ENCODE measurements at regions of chr3 and their contacts with region 1.

Region 1: GRCh38 chr3:117019082-117019713 is 309.6 kb downstream of the TUSC7 start:
- DNase-seq: peak; percentile 51
- ATAC-seq: peak; percentile 93
- H3K4me3 ChIP-seq: peak overlapping the region in 1 of 2 experiments; percentile 17; a peak in 1 of 4 replicates
- H3K27ac ChIP-seq: no peak overlapping the region
- H3K4me1 ChIP-seq: peaks cover 3% of the 10 kb centered on the region; the same call in 1 of the 2 replicates
- H3K27me3 ChIP-seq: peaks cover 5% of the 10 kb centered on the region
- CTCF ChIP-seq: peak; percentile 89

Region 2: DNA sequence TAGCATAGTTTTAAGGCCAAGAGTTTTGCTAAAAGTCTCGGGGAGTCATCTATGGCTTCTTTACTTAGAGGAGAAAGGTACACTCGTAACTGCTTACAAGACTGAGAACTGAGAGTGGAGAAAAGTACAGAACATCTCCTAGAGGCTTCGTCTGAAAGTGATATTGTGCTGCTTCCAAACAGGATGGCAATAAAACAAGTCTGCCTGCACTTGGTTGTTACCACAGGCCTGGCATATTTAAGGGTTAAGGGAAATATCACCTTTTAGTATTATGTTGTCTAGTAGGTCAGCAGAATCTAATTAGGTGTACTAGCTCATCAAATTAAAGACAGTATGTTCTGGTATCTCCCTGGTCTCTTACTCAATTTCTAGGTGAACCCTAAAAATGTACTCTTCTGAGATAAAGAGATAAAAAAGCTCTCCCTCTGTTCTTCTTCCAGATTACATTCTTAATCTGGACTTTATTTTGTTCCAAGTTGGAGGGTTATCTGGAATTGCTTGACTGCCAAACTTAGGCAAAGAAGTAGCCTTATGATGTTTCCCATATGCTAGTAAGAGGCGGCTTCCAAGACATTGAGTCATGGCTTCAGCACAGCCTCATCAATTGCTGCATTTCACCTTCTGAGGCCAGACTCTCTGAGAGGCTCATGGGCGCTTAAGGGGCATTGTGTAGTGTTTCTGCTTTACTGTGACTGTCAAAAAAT is 755.2 kb before region 1 on chr3:
- CTCF ChIA-PET with region 1: no interaction called
- POLR2A ChIA-PET with region 1: no interaction called
- in situ Hi-C with region 1: no loop called
- intact Hi-C with region 1: no loop called
- DNase-seq: no peak
- ATAC-seq: no peak
- H3K4me3 ChIP-seq: no peak overlapping the region
- H3K27ac ChIP-seq: no peak overlapping the region
- H3K4me1 ChIP-seq: no peaks in the 10 kb centered on the region; the same call in 1 of the 2 replicates
- H3K27me3 ChIP-seq: no peaks in the 10 kb centered on the region
- CTCF ChIP-seq: no peak

Region 3: DNA sequence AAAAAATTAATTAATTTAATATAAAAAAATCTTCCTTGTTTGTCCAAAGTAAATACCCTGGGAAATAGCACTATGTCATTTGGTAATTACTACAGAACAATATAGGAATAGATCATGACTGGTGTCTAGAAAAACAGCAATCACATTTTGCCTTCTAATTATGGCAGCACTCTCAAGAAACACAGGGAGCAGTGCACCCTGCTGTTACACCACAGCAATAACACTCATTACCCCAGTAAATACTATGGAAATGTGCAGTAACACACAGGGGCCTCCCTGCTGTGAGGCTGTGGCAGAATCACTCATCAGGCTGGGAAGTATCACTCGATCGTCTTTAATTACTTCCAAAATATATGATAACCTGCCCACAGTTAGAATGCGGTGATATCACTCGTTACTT is 336.4 kb after region 1 on chr3:
- CTCF ChIA-PET with region 1: no interaction called
- POLR2A ChIA-PET with region 1: no interaction called
- in situ Hi-C with region 1: no loop called
- intact Hi-C with region 1: loop called (anchors 10 kb)
- DNase-seq: no peak
- ATAC-seq: no peak
- H3K4me3 ChIP-seq: no peak overlapping the region
- H3K27ac ChIP-seq: no peak overlapping the region
- H3K4me1 ChIP-seq: no peaks in the 10 kb centered on the region
- H3K27me3 ChIP-seq: no peaks in the 10 kb centered on the region
- CTCF ChIP-seq: peak; percentile 36; the same call in 1 of the 2 replicates

Region 4: DNA sequence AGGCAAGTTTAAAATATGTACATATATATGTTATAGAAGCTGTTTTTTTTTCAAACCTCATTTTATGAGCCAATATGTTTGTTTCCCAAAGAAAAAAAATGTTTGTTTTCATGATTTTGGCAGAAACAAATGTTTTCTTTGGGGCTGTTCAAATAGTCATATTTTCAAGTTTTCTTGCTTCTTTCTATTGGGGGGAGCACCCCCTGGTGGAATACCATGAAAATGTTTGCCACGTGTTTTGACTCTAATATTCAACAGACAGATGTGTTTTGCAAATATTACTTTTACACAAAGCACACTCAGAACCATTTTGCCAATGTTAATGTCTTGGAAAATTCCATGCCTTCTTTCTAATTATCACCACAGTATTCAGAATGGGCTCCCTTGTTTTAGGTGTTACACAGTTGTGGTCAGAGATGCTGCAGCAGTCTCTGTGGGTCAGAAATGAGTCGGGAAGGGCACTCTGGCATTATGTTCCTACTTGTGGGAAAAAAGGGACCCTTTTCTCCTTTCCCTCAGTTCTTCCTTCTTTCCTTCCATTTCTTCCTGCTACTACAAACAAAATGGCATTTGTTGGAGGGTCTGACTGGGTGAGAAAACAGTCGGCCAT is 507.4 kb after region 1 on chr3:
- CTCF ChIA-PET with region 1: interaction called, 4 read pairs
- POLR2A ChIA-PET with region 1: no interaction called
- in situ Hi-C with region 1: no loop called
- intact Hi-C with region 1: loop called (anchors 5 kb)
- DNase-seq: no peak
- ATAC-seq: no peak
- H3K4me3 ChIP-seq: no peak overlapping the region
- H3K27ac ChIP-seq: no peak overlapping the region
- H3K4me1 ChIP-seq: no peaks in the 10 kb centered on the region
- H3K27me3 ChIP-seq: no peaks in the 10 kb centered on the region; the same call in 1 of the 2 replicates
- CTCF ChIP-seq: peak; percentile 69

Region 5: GRCh38 chr3:117719316-117719926 is 700.2 kb after region 1 on chr3:
- CTCF ChIA-PET with region 1: no interaction called
- POLR2A ChIA-PET with region 1: no interaction called
- in situ Hi-C with region 1: no loop called
- intact Hi-C with region 1: loop called (anchors 5 kb)
- DNase-seq: no peak
- ATAC-seq: no peak
- H3K4me3 ChIP-seq: no peak overlapping the region
- H3K27ac ChIP-seq: no peak overlapping the region
- H3K4me1 ChIP-seq: no peaks in the 10 kb centered on the region
- H3K27me3 ChIP-seq: no peaks in the 10 kb centered on the region
- CTCF ChIP-seq: peak; percentile 75; the same call in 1 of the 2 replicates

Region 6: DNA sequence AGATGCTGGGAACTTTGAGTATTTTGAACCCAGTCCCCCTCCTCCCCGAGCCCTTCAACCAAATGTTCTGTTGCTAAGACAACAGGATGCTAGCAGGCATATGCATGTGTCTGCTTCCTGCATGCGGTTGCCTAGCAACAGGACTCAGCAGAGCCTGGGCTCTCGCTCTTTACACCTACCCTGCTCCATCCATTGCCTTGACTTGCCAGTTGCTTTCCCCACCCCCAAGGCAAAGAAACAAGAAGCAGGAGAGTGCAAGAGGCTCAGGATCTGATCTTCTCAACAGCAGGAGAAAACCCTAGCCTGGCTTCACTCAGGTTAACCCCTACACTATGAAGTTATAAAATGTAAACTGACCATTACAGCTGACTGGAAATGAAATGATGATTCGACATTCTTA is 1622.4 kb after region 1 on chr3:
- CTCF ChIA-PET with region 1: no interaction called
- POLR2A ChIA-PET with region 1: no interaction called
- in situ Hi-C with region 1: no loop called
- intact Hi-C with region 1: loop called (anchors 10 kb)
- DNase-seq: no peak
- ATAC-seq: no peak
- H3K4me3 ChIP-seq: no peak overlapping the region
- H3K27ac ChIP-seq: no peak overlapping the region
- H3K4me1 ChIP-seq: no peaks in the 10 kb centered on the region
- H3K27me3 ChIP-seq: no peaks in the 10 kb centered on the region
- CTCF ChIP-seq: no peak

Region 7: DNA sequence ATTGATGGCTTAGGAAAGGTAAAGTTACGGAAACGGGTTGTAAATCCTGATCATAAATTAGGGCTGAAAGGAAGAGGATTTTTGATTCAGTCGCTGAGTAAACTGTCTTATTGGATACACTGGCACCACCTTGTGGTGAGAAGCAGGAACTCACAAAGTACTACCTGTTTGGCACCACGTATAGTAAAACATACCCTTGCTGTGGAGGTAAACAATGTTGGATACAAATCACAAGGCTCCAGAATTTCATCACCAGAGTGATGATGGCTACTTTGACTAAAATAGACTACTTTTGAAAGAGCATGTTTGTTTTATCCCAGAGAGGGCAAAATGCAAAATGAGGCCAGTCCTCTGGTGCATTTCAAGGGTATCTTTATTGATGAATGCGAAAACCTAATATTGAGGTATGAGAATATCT is 1798.6 kb after region 1 on chr3:
- CTCF ChIA-PET with region 1: no interaction called
- POLR2A ChIA-PET with region 1: no interaction called
- in situ Hi-C with region 1: no loop called
- intact Hi-C with region 1: loop called (anchors 5 kb)
- DNase-seq: no peak
- ATAC-seq: peak; percentile 88
- H3K4me3 ChIP-seq: no peak overlapping the region
- H3K27ac ChIP-seq: no peak overlapping the region
- H3K4me1 ChIP-seq: no peaks in the 10 kb centered on the region
- H3K27me3 ChIP-seq: 0 out of 2 replicates have a peak, but pooled peaks cover 3% of the 10 kb centered on the region
- CTCF ChIP-seq: peak; percentile 84

Measured in Panc1 (cell line).